Activated CD4-positive, alpha-beta memory T cell treated with anti-CD3 and anti-CD28 coated beads for 36 hours (primary cell): ENCODE measurements at regions of chr2 and their contacts with region 1.

Region 1: GRCh38 chr2:216139884-216140283 is 30.7 kb downstream of the XRCC5 start:
- DNase-seq: peak; percentile 43
- H3K4me3 Mint-ChIP-seq: no peak overlapping the region
- H3K27ac Mint-ChIP-seq: no peak overlapping the region
- H3K4me1 Mint-ChIP-seq: peaks cover 23% of the 10 kb centered on the region
- H3K27me3 Mint-ChIP-seq: no peaks in the 10 kb centered on the region

Region 2: GRCh38 chr2:216151313-216152030 is 11.6 kb after region 1 on chr2:
- CTCF ChIA-PET with region 1: interaction called, 10 read pairs
- POLR2A ChIA-PET with region 1: no interaction called
- intact Hi-C with region 1: no loop called
- DNase-seq: no peak
- H3K4me3 Mint-ChIP-seq: no peak overlapping the region
- H3K27ac Mint-ChIP-seq: peak overlapping the region; percentile 14
- H3K4me1 Mint-ChIP-seq: peaks cover 35% of the 10 kb centered on the region
- H3K27me3 Mint-ChIP-seq: no peaks in the 10 kb centered on the region

Region 3: DNA sequence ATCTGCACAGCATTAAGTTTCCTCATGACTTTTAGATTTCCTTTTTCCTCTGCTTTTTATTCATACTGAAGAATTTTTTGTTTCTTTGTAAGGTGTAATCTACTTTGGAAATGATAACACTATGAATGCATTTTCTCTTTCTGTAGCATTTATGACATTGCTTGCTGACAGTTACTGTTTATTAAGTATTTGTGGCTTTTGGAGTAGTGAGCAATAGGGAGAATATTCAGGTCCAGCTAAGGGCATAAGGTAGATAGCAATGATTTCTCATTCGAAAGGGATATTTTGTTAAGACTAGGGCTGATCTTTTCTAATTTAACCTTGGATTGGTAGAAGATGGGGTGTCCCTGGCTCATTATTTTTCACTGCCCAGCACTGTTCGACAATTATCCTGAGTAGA is 49.5 kb after region 1 on chr2:
- CTCF ChIA-PET with region 1: no interaction called
- POLR2A ChIA-PET with region 1: no interaction called
- intact Hi-C with region 1: no loop called
- DNase-seq: no peak
- H3K4me3 Mint-ChIP-seq: no peak overlapping the region
- H3K27ac Mint-ChIP-seq: peak overlapping the region; percentile 59
- H3K4me1 Mint-ChIP-seq: peaks cover 70% of the 10 kb centered on the region
- H3K27me3 Mint-ChIP-seq: no peaks in the 10 kb centered on the region